PC-3 (cell line): ENCODE measurements at regions of chr4 and their contacts with region 1.

Region 1: DNA sequence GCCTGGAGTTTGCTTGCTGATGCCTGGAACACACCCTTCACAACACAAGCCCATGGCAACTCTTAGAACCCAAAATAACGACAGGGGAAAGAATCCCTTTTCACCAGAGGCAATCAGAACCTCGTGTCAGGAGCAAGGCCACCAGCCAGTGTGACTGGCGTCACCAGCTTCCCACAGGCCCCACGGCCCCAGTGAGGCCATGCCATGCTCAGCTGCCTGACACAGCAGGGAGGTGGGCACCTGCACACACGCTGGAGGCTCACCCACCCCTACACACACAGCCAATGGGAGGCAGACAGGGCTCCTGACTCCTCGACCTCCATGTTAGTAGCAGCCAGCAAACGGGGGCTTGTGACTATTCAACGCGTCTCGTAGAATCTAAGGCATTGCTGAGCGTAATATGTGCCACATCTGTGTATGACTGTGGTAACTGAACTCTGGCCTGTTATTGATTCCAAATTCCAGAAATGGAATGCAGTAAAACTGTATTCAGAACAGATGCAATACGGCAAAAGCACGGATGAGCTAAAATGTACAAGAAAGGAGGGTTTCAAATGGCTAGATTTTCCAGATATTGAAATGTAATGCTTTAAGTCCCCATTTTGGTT is 28.5 kb downstream of the RNF212 start:
- DNase-seq: no peak
- ATAC-seq: no peak
- H3K4me3 ChIP-seq: no peak overlapping the region
- H3K27ac ChIP-seq: no peak overlapping the region
- H3K4me1 ChIP-seq: peaks cover 21% of the 10 kb centered on the region
- H3K27me3 ChIP-seq: no peaks in the 10 kb centered on the region
- CTCF ChIP-seq: no peak

Region 2: GRCh38 chr4:1043658-1044468 is 41.0 kb before region 1 on chr4:
- CTCF ChIA-PET with region 1: no interaction called
- POLR2A ChIA-PET with region 1: interaction called, 15 read pairs
- intact Hi-C with region 1: no loop called
- DNase-seq: peak; percentile 97
- ATAC-seq: peak; percentile 81
- H3K4me3 ChIP-seq: 0 out of 2 replicates have a peak overlapping the region, but pooled peaks have one; percentile 22
- H3K27ac ChIP-seq: peak overlapping the region; percentile 80
- H3K4me1 ChIP-seq: peaks cover 38% of the 10 kb centered on the region
- H3K27me3 ChIP-seq: no peaks in the 10 kb centered on the region
- CTCF ChIP-seq: no peak

Region 3: DNA sequence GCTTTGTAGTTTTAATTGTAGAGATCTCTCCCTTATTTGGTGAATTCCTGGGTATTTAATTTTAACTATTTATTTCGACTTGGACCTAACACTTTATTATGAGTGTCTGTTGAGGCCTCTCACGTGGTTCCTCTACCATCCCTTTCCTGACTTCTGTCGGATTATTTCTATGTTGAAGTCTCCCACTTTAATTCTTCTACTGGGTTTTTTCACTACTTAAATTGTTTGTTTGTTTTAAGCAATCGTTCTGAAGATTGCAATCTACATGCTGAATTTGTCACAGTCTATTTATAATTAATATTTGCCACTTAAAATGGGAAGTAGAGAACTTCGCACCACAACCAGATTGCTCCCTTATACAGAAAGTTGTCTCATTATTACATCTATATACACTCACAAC is 342.1 kb after region 1 on chr4:
- CTCF ChIA-PET with region 1: no interaction called
- POLR2A ChIA-PET with region 1: no interaction called
- intact Hi-C with region 1: no loop called
- DNase-seq: no peak
- ATAC-seq: no peak
- H3K4me3 ChIP-seq: no peak overlapping the region
- H3K27ac ChIP-seq: no peak overlapping the region
- H3K4me1 ChIP-seq: no peaks in the 10 kb centered on the region
- H3K27me3 ChIP-seq: peaks cover 45% of the 10 kb centered on the region
- CTCF ChIP-seq: no peak